ENCODE measurements at regions of chr9 and their contacts with region 1.

Region 1: DNA sequence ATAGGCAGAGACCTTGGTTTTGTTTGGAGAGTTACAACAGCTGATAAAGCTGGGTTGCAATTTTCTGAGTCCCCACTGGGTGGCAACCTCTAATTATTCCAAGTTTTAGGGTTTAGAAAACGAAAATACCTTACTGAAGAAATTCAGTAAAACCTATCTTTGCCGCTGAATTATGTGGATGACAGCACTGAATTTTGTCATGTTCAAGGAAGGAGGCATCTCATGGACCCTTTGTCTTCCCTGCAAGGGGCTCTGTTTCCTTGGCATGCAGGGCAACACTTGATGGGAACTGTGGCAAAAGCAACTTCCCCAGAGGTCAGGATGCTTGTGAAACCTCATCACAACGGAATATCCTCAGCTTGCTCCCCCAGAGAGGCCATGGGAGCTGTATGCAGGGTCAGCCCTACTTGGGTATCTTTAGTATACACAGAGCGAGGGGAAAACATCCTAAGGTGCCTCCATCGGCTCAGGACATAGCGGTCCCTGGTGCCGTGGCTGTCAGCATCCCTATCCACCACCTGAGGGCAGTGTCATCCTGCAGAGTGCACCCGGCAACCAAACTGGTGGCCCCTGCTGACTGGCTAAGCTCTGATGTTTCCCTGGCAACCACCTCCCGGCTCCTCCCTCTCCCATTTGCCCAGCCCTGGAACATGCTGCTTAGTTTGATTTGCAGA is 123.1 kb downstream of the RXRA start:
- DNase-seq: peak; percentile 94
- ATAC-seq: peak; percentile 100
- H3K4me3 ChIP-seq: no peak overlapping the region
- H3K27ac ChIP-seq: no peak overlapping the region
- H3K4me1 ChIP-seq: peaks cover 2% of the 10 kb centered on the region; the same call in 1 of the 2 replicates
- H3K27me3 ChIP-seq: no peaks in the 10 kb centered on the region
- CTCF ChIP-seq: peak; percentile 99
- POLR2A ChIP-seq: peak; percentile 61
- RAD21 ChIP-seq: peak; percentile 100

Region 2: GRCh38 chr9:134067904-134068743 is 381.2 kb before region 1 on chr9 and contains the start of gene BRD3:
- CTCF ChIA-PET with region 1: no interaction called
- POLR2A ChIA-PET with region 1: no interaction called
- dilution Hi-C with region 1: no loop called
- in situ Hi-C with region 1: no loop called
- intact Hi-C with region 1: loop called (anchors 10 kb)
- DNase-seq: peak; percentile 88
- ATAC-seq: peak; percentile 91
- H3K4me3 ChIP-seq: peak within 1 kb of the TSS; percentile 96
- H3K27ac ChIP-seq: peak within 1 kb of the TSS; percentile 81
- H3K4me1 ChIP-seq: peaks cover 7% of the 10 kb centered on the region
- H3K27me3 ChIP-seq: peaks cover 29% of the 10 kb centered on the region
- CTCF ChIP-seq: no peak
- POLR2A ChIP-seq: peak; percentile 51; the same call in 1 of the 2 replicates
- RAD21 ChIP-seq: no peak
- total RNA-seq, gene BRD3: 2.2 and 3.6 TPM in 2 replicates

Region 3: DNA sequence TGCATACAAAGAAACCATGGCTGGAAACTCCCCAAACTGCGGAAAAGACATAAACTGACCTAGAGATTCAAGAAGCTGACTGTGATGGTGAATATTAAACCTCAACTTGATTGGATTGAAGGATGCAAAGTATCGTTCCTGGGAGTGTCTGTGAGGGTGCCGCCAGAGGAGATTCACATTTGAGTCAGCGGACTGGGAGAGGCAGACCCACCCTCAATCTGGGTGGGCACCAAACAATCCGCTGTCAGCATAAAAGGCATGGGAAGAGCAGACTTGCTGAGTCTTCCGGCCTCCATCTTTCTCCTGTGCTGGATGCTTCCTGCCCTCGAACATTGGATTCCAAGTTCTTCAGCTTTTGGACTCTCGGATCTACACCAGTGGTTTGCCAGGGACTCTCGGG is 338.3 kb before region 1 on chr9:
- CTCF ChIA-PET with region 1: no interaction called
- POLR2A ChIA-PET with region 1: no interaction called
- dilution Hi-C with region 1: no loop called
- in situ Hi-C with region 1: no loop called
- intact Hi-C with region 1: no loop called
- DNase-seq: no peak
- ATAC-seq: no peak
- H3K4me3 ChIP-seq: no peak overlapping the region
- H3K27ac ChIP-seq: no peak overlapping the region
- H3K4me1 ChIP-seq: no peaks in the 10 kb centered on the region
- H3K27me3 ChIP-seq: peaks cover 3% of the 10 kb centered on the region; the same call in 1 of the 2 replicates
- CTCF ChIP-seq: no peak
- POLR2A ChIP-seq: no peak
- RAD21 ChIP-seq: no peak

Region 4: DNA sequence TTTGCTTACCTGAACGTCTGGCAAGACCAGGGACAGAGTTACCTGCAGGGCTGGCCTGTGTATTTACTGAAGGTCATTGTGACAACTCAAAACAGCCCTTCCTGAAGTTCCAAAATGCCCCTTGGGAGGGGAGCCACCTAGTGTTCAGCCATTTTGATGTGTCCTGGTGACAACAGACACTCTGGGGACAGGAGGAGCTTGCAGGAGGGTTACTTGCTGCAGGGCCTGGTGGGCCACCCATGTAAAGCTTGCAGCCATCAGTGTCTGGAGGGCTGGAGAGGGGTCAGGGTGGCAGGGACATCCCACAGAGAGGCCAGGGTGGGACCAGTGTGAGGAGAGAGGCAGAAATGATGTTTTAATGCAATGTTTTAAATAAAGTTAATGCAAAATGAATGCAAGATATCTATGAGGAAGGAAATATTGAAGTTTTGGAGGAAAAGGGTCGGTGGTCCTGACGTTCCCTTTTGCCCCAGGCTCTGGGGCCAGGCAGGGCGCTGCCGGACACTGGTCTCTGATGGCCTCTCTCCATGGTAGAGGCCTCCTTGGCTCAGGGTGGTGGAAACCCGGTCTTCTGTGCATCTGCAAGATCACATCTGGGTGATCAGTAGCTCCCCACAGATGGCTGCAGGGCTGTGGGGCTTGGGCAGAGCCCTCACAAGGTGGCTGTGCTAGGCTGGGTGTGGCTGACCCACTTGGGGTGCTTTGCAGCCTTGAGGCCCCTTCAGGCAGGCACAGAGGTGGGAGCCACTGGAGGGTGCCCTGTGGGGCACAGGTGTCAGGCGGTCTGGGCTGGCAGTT is 231.3 kb before region 1 on chr9:
- CTCF ChIA-PET with region 1: no interaction called
- POLR2A ChIA-PET with region 1: no interaction called
- dilution Hi-C with region 1: no loop called
- in situ Hi-C with region 1: no loop called
- intact Hi-C with region 1: no loop called
- DNase-seq: no peak
- ATAC-seq: no peak
- H3K4me3 ChIP-seq: no peak overlapping the region
- H3K27ac ChIP-seq: no peak overlapping the region
- H3K4me1 ChIP-seq: peaks cover 40% of the 10 kb centered on the region
- H3K27me3 ChIP-seq: no peaks in the 10 kb centered on the region
- CTCF ChIP-seq: 0 out of 2 replicates have a peak, but pooled peaks have one; percentile 1
- POLR2A ChIP-seq: no peak
- RAD21 ChIP-seq: no peak

Region 5: GRCh38 chr9:134585746-134586706 is 136.7 kb after region 1 on chr9:
- CTCF ChIA-PET with region 1: no interaction called
- POLR2A ChIA-PET with region 1: no interaction called
- dilution Hi-C with region 1: no loop called
- in situ Hi-C with region 1: no loop called
- intact Hi-C with region 1: no loop called
- DNase-seq: peak; percentile 75
- ATAC-seq: peak; percentile 99
- H3K4me3 ChIP-seq: no peak overlapping the region
- H3K27ac ChIP-seq: no peak overlapping the region
- H3K4me1 ChIP-seq: peaks cover 9% of the 10 kb centered on the region
- H3K27me3 ChIP-seq: no peaks in the 10 kb centered on the region
- CTCF ChIP-seq: peak; percentile 37
- POLR2A ChIP-seq: no peak
- RAD21 ChIP-seq: peak; percentile 56

Region 6: DNA sequence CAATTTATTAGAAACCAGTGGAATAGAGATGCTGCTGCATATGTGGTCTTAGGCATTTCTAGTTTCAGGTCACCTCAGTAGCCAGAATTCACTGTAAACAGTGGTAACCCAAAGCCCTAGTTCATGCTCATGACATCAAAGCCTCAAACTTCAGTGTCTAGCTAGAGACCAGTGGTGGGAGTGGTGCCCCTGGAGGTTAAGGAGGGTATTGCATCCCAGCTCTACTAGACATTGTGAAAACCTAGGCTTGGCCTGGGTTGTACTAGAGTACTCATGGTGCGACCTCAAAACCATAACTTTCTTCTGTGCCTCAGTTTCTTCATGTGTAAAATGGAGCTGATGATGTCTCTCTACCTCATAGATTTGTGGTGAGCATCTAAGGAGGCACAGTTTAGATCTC is 211.0 kb after region 1 on chr9:
- CTCF ChIA-PET with region 1: interaction called, 4 read pairs
- POLR2A ChIA-PET with region 1: no interaction called
- dilution Hi-C with region 1: no loop called
- in situ Hi-C with region 1: no loop called
- intact Hi-C with region 1: loop called (anchors 5 kb)
- DNase-seq: no peak
- ATAC-seq: no peak
- H3K4me3 ChIP-seq: no peak overlapping the region
- H3K27ac ChIP-seq: no peak overlapping the region; the same call in 1 of the 2 replicates
- H3K4me1 ChIP-seq: peaks cover 26% of the 10 kb centered on the region
- H3K27me3 ChIP-seq: no peaks in the 10 kb centered on the region
- CTCF ChIP-seq: peak; percentile 49
- POLR2A ChIP-seq: no peak
- RAD21 ChIP-seq: no peak

Region 7: GRCh38 chr9:134698587-134699342 is 249.4 kb after region 1 on chr9:
- CTCF ChIA-PET with region 1: no interaction called
- POLR2A ChIA-PET with region 1: no interaction called
- dilution Hi-C with region 1: no loop called
- in situ Hi-C with region 1: no loop called
- intact Hi-C with region 1: loop called (anchors 1 kb)
- DNase-seq: peak; percentile 36
- ATAC-seq: peak; percentile 77
- H3K4me3 ChIP-seq: no peak overlapping the region
- H3K27ac ChIP-seq: no peak overlapping the region
- H3K4me1 ChIP-seq: peaks cover 7% of the 10 kb centered on the region
- H3K27me3 ChIP-seq: no peaks in the 10 kb centered on the region
- CTCF ChIP-seq: peak; percentile 69
- POLR2A ChIP-seq: no peak
- RAD21 ChIP-seq: peak; percentile 75

Region 8: GRCh38 chr9:134738869-134739659 is 289.7 kb after region 1 on chr9:
- CTCF ChIA-PET with region 1: interaction called, 4 read pairs
- POLR2A ChIA-PET with region 1: no interaction called
- dilution Hi-C with region 1: no loop called
- in situ Hi-C with region 1: loop called (anchors 5 kb)
- intact Hi-C with region 1: loop called (anchors 1 kb)
- DNase-seq: peak; percentile 49
- ATAC-seq: peak; percentile 75
- H3K4me3 ChIP-seq: no peak overlapping the region
- H3K27ac ChIP-seq: no peak overlapping the region
- H3K4me1 ChIP-seq: peaks cover 9% of the 10 kb centered on the region
- H3K27me3 ChIP-seq: no peaks in the 10 kb centered on the region
- CTCF ChIP-seq: peak; percentile 73
- POLR2A ChIP-seq: no peak
- RAD21 ChIP-seq: peak; percentile 74

Region 9: GRCh38 chr9:134768709-134769351 is 319.5 kb after region 1 on chr9:
- CTCF ChIA-PET with region 1: no interaction called
- POLR2A ChIA-PET with region 1: no interaction called
- dilution Hi-C with region 1: no loop called
- in situ Hi-C with region 1: no loop called
- intact Hi-C with region 1: no loop called
- DNase-seq: no peak
- ATAC-seq: no peak
- H3K4me3 ChIP-seq: no peak overlapping the region
- H3K27ac ChIP-seq: no peak overlapping the region
- H3K4me1 ChIP-seq: peaks cover 2% of the 10 kb centered on the region; the same call in 1 of the 2 replicates
- H3K27me3 ChIP-seq: no peaks in the 10 kb centered on the region
- CTCF ChIP-seq: no peak
- POLR2A ChIP-seq: no peak
- RAD21 ChIP-seq: no peak

Region 10: GRCh38 chr9:134811673-134812342 is 362.4 kb after region 1 on chr9:
- CTCF ChIA-PET with region 1: no interaction called
- POLR2A ChIA-PET with region 1: no interaction called
- dilution Hi-C with region 1: no loop called
- in situ Hi-C with region 1: no loop called
- intact Hi-C with region 1: loop called (anchors 1 kb)
- DNase-seq: peak; percentile 96
- ATAC-seq: peak; percentile 73
- H3K4me3 ChIP-seq: no peak overlapping the region
- H3K27ac ChIP-seq: peak overlapping the region; percentile 99
- H3K4me1 ChIP-seq: peaks cover 54% of the 10 kb centered on the region
- H3K27me3 ChIP-seq: no peaks in the 10 kb centered on the region
- CTCF ChIP-seq: peak; percentile 32; the same call in 1 of the 2 replicates
- POLR2A ChIP-seq: no peak
- RAD21 ChIP-seq: peak; percentile 19; the same call in 1 of the 2 replicates

Region 11: DNA sequence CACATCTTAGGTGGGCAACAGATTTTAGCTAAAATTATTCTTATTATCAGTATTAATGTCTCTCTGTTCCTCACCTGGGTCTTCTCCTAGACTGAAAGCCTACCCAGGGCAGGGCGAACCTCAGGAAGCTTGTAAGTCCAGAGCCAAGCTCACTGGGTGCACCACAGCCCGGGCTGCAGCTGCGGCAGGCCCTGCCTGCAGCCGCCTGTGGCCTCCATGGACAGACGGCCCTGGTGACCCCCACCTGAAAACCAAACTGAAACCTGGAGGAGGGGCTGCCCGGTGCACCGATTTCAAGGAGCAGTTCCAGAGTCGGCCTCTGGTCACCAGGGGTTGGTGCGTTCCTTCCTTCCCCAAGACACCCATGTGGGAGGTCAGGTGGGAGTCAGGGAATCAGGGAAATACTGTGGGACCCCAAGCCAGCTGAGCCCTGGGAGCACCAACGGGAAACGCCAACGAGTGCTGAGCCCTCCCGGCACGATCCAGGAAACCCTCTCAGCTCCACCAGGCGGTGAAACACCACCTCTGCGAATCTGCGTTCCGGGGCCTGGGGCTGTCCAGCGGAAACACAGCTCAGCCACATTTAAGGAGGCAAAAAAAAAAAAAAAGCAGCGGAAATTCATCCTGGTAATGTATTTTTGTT is 961.6 kb after region 1 on chr9:
- CTCF ChIA-PET with region 1: no interaction called
- POLR2A ChIA-PET with region 1: interaction called, 14 read pairs
- dilution Hi-C with region 1: no loop called
- in situ Hi-C with region 1: no loop called
- intact Hi-C with region 1: loop called (anchors 5 kb)
- DNase-seq: no peak
- ATAC-seq: no peak
- H3K4me3 ChIP-seq: no peak overlapping the region
- H3K27ac ChIP-seq: no peak overlapping the region
- H3K4me1 ChIP-seq: no peaks in the 10 kb centered on the region
- H3K27me3 ChIP-seq: peaks cover 5% of the 10 kb centered on the region; the same call in 1 of the 2 replicates
- CTCF ChIP-seq: no peak
- POLR2A ChIP-seq: no peak
- RAD21 ChIP-seq: no peak

Measured in IMR-90 (cell line).